Natural killer cell (primary cell): ENCODE measurements at regions of chr20 and their contacts with region 1.

Region 1: DNA sequence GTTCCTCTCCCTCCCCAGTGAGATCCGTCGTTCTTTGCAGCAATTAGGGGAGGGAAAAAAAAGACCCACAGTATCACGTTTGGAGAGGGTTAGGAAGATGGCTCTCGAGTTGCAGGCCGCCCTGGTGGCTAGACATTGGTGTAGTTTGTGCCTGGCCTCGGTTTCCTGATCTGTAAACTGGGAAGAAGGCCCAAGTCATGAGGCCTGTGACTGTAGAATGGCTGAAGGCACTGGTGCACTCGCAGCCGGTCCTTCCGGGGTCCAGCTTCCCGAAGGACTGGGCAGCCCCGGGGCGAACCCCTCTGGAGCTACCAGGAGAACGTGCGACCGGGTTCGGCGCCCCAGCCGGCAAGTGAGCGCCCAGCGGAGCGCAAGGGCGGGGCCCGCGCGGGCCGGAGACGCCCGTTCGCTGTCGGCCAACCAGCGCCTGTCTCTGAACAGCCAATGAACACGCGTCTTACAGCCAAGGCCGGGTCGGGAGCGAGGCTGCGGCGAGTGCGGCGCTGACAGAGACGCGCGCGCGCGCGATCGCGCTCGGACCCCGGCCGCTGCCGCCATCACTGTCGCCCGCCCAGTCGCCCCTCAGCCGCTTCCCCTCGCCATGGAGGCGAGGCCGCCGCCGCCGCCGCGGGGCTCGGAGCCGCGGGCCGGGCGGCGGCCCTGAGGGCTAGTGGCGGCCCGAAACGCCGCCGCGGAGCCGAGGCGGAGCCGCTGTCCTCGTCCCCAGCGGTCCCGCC is at the start of gene PTPRA:
- DNase-seq: peak; percentile 94 to 95
- ATAC-seq: peak; percentile 89 to 97 (median 91)
- H3K4me3 ChIP-seq: peak within 1 kb of the TSS; percentile 94
- H3K4me3 Mint-ChIP-seq: peak within 1 kb of the TSS; percentile 91
- H3K27ac ChIP-seq: peak within 1 kb of the TSS; percentile 58
- H3K27ac Mint-ChIP-seq: peak within 1 kb of the TSS; percentile 74 to 85
- H3K4me1 ChIP-seq: peaks cover 48% of the 10 kb centered on the region
- H3K4me1 Mint-ChIP-seq: peaks cover 65 to 68% of the 10 kb centered on the region in 2 donors
- H3K27me3 ChIP-seq: no peaks in the 10 kb centered on the region
- H3K27me3 Mint-ChIP-seq: no peaks in the 10 kb centered on the region
- CTCF ChIP-seq: no peak
- total RNA-seq, gene PTPRA: 125 to 172 (median 141) TPM

Region 2: DNA sequence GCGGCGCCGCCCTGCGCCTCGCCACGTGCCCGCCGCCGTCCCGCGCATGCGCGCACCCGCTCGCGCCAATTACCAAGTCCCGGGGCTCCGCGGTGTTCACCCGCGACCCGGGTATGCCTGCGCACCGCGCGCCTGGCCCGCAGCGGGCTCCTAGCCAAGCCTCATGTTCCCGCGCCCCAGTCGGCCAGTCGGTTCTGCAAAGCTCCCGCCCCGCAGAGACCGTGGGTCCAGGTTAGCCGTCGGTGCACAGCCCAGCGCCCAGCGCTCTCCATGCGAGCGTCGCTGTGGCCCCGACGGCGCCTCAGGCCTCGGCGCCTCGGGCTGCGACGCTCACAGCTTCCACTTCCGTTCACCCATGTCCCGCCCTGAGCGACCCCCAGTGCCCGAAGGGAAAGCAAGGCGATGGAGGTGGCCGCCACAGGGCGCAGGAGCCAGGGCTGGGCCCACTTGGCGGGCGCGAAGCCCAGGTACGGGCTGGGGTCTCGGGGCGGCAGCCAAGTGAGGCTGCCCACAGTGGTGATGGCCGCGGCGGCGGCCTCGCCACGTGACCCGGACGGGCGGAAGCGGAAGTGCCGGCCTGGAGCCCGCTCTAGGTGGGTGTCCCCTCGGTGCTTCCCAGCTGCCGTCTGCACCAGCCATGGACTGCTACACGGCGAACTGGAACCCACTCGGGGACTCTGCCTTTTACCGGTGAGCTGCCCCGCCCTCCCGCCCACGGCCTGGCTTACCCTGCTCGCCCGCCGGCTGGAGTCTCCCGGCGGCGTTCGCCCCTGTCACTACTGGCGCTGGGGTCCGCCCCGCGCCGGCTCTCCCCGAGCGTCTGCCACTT is 32.8 kb before region 1 on chr20 and contains the starts of genes PCED1A and VPS16:
- intact Hi-C with region 1: loop called (anchors 2 kb)
- DNase-seq: peak; percentile 90 to 94
- ATAC-seq: peak; percentile 95 to 97 (median 96)
- H3K4me3 ChIP-seq: peak within 1 kb of the TSS; percentile 83
- H3K4me3 Mint-ChIP-seq: peak within 1 kb of the TSS; percentile 94
- H3K27ac ChIP-seq: peak within 1 kb of the TSS; percentile 81
- H3K27ac Mint-ChIP-seq: peak within 1 kb of the TSS; percentile 81 to 95
- H3K4me1 ChIP-seq: peaks cover 26% of the 10 kb centered on the region
- H3K4me1 Mint-ChIP-seq: peaks cover 30 to 55% of the 10 kb centered on the region in 2 donors
- H3K27me3 ChIP-seq: no peaks in the 10 kb centered on the region
- H3K27me3 Mint-ChIP-seq: no peaks in the 10 kb centered on the region
- CTCF ChIP-seq: no peak
- total RNA-seq, gene PCED1A: 70.3 to 76.5 (median 71.1) TPM
- total RNA-seq, gene VPS16: 108 to 118 (median 109) TPM

Region 3: DNA sequence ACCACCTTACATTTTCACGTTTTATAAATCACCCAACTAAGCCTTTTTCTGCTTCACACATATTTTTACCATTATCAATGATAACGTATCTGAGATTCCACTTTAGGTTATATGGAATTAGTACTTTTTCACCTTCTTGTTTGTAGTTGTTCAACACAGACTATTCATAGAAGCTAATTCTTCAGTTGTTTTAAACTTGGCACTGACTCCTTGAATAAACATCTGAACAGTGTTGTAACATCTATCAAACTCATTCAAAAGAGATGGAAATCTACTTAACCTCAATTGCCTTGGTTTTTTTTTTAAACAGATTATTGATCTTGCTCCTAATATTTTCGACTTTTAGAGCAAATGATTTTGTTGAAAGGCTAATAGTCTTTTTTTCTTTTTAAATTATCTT is 34.3 kb after region 1 on chr20:
- intact Hi-C with region 1: loop called (anchors 5 kb)
- DNase-seq: no peak
- ATAC-seq: no peak
- H3K4me3 ChIP-seq: no peak overlapping the region
- H3K4me3 Mint-ChIP-seq: no peak overlapping the region
- H3K27ac ChIP-seq: no peak overlapping the region
- H3K27ac Mint-ChIP-seq: no peak overlapping the region
- H3K4me1 ChIP-seq: no peaks in the 10 kb centered on the region
- H3K4me1 Mint-ChIP-seq: peaks cover 18 to 23% of the 10 kb centered on the region in 2 donors
- H3K27me3 ChIP-seq: no peaks in the 10 kb centered on the region
- H3K27me3 Mint-ChIP-seq: no peaks in the 10 kb centered on the region
- CTCF ChIP-seq: no peak

Region 4: DNA sequence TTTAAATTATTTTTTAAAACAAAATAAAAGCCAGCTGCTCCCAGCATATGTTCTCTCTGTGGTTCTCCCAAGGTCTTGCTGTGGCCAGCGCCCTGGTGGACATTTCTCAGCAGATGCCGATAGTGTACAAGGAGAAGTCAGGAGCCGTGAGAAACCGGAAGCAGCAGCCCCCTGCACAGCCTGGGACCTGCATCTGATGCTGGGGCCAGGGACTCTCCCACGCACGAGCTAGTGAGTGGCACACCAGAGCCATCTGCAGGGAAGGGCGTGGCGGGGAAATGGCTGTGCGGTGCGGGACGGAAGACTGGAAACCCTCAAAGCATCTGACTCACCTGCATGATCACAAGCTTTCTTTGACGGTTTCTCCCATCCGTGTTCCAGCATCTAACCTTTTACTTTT is 773.5 kb after region 1 on chr20:
- intact Hi-C with region 1: no loop called
- DNase-seq: no peak
- ATAC-seq: no peak
- H3K4me3 ChIP-seq: no peak overlapping the region
- H3K4me3 Mint-ChIP-seq: no peak overlapping the region
- H3K27ac ChIP-seq: no peak overlapping the region
- H3K27ac Mint-ChIP-seq: no peak overlapping the region
- H3K4me1 ChIP-seq: no peaks in the 10 kb centered on the region
- H3K4me1 Mint-ChIP-seq: no peaks in the 10 kb centered on the region
- H3K27me3 ChIP-seq: no peaks in the 10 kb centered on the region
- H3K27me3 Mint-ChIP-seq: no peaks in the 10 kb centered on the region
- CTCF ChIP-seq: no peak